Transverse colon (tissue), 4 donors: ENCODE measurements at regions of chr2 and their contacts with region 1.

Region 1: DNA sequence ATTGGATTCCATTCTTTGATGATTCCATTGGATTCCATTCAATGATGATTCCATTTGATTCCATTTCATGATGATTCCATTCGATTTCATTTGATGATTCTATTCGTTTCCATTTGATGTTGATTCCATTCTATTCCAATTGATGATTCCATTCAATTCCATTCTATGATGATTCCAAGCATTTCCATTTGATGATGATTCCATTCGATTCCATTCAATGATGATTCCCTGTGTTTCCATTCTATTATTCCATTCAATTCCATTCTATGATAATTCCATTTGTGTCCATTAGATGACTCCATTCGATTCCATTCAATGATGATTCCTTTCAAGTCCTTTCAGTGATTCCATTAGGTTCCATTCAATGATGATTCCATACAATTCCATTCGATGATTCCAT is 1090.5 kb downstream of the RPIA start:
- DNase-seq: no peak
- H3K4me3 ChIP-seq: no peak overlapping the region
- H3K27ac ChIP-seq: no peak overlapping the region
- H3K4me1 ChIP-seq: no peaks in the 10 kb centered on the region
- H3K27me3 ChIP-seq: no peaks in the 10 kb centered on the region
- CTCF ChIP-seq: no peak
- EP300 ChIP-seq: no peak
- POLR2A ChIP-seq: no peak

Region 2: GRCh38 chr2:89763254-89763580 is 18.7 kb before region 1 on chr2:
- in situ Hi-C with region 1: no loop called
- intact Hi-C with region 1: no loop called
- DNase-seq: no peak
- H3K4me3 ChIP-seq: no peak overlapping the region
- H3K27ac ChIP-seq: no peak overlapping the region
- H3K4me1 ChIP-seq: peaks cover 0 to 4% (median 0%) of the 10 kb centered on the region in 4 donors
- H3K27me3 ChIP-seq: peaks cover 29% of the 10 kb centered on the region
- CTCF ChIP-seq: no peak
- EP300 ChIP-seq: no peak
- POLR2A ChIP-seq: no peak

Region 3: DNA sequence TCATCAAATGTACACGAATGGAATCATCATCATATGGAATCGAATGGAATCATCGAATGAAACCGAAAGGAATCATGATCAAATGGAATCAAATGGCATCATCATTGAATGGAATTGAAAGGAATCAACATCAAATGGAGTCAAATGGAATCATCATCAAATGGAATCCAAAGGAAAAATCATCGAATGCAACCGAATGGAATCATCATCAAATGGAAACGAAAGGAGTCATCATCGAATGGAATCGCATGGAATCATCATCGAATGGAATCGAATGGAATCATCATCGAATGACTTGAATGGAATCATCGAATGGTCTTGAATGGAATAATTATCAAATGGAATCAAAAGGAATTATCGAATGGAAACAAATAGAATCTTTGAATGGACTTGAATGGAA is 25.7 kb after region 1 on chr2:
- in situ Hi-C with region 1: no loop called
- intact Hi-C with region 1: loop called (anchors 1 kb)
- DNase-seq: no peak
- H3K4me3 ChIP-seq: no peak overlapping the region
- H3K27ac ChIP-seq: no peak overlapping the region
- H3K4me1 ChIP-seq: no peaks in the 10 kb centered on the region
- H3K27me3 ChIP-seq: no peaks in the 10 kb centered on the region
- CTCF ChIP-seq: no peak
- EP300 ChIP-seq: no peak
- POLR2A ChIP-seq: no peak

Region 4: DNA sequence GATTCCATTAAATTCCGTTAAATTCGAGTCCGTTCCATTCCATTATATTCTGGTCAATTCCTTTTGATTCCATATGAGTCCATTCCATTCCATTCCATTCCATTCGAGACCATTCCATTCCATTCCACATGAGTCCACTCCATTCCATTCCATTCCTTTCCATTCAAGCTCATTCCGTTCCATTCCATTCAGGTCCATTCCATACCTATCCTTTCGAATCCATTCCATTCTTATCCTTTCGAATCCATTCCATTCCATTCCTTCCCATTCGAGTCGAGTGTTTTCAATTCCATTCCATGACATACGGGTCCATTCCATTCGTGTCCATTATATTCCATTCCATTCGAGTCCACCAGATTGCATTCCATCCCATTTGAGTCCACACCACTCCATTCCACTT is 36.9 kb after region 1 on chr2:
- in situ Hi-C with region 1: no loop called
- intact Hi-C with region 1: no loop called
- DNase-seq: no peak
- H3K4me3 ChIP-seq: no peak overlapping the region
- H3K27ac ChIP-seq: no peak overlapping the region
- H3K4me1 ChIP-seq: no peaks in the 10 kb centered on the region
- H3K27me3 ChIP-seq: no peaks in the 10 kb centered on the region
- CTCF ChIP-seq: no peak
- EP300 ChIP-seq: no peak
- POLR2A ChIP-seq: no peak